ENCODE measurements at regions of chr11 and their contacts with region 1.

Region 1: GRCh38 chr11:101974255-101974654 is 57.9 kb upstream of the ANGPTL5 start:
- DNase-seq: peak; percentile 52
- ATAC-seq: peak; percentile 97
- H3K4me3 ChIP-seq: no peak overlapping the region
- H3K27ac ChIP-seq: no peak overlapping the region
- H3K4me1 ChIP-seq: 0 out of 2 replicates have a peak, but pooled peaks cover 5% of the 10 kb centered on the region
- H3K27me3 ChIP-seq: no peaks in the 10 kb centered on the region
- CTCF ChIP-seq: peak; percentile 61

Region 2: DNA sequence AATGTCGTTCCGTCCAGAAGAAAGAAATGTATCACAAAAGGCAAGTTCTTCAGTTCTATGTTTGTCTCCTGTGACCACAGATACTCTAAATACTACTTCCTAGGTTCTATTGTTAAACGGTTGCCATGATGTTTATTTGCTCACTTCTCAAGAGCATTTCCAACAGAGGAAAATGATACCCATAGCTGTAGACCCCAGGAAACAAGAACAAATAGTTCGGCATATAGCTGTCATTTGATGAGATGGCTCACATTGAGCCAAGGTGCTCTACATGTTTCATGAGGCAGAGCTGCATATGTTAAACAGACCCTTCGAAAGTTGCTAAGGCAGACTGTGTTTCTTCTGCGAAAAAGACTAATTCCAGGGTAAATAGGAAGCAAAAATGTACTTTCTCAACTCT is 42.6 kb before region 1 on chr11:
- CTCF ChIA-PET with region 1: no interaction called
- POLR2A ChIA-PET with region 1: no interaction called
- intact Hi-C with region 1: loop called (anchors 5 kb)
- DNase-seq: no peak
- ATAC-seq: no peak
- H3K4me3 ChIP-seq: no peak overlapping the region
- H3K27ac ChIP-seq: no peak overlapping the region
- H3K4me1 ChIP-seq: no peaks in the 10 kb centered on the region
- H3K27me3 ChIP-seq: no peaks in the 10 kb centered on the region
- CTCF ChIP-seq: no peak